ENCODE measurements at regions of chr2 and their contacts with region 1.

Region 1: DNA sequence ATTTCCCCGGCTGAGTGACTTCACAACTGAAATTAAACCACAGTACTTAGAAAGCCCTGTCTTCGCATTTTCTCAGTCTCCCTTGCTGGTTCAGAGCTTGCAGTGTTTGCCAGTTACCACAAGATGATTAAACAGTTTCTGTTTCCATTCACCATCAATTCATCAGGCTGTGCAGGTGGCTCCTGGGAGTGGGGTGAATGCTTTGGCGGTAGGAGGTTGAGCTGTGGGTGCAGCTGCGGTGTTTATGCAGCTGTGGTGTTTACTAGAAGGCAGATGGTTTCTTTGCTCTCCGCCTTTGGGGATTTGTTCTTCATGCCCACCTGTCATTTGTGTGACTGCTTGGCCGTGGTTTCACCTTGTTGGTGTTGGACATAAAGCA is 16.1 kb downstream of the ACOXL start:
- DNase-seq: peak; percentile 89
- H3K4me3 Mint-ChIP-seq: peak overlapping the region; percentile 23
- H3K27ac Mint-ChIP-seq: peak overlapping the region; percentile 47
- H3K4me1 Mint-ChIP-seq: peaks cover 19% of the 10 kb centered on the region
- H3K27me3 Mint-ChIP-seq: peaks cover 62% of the 10 kb centered on the region

Region 2: DNA sequence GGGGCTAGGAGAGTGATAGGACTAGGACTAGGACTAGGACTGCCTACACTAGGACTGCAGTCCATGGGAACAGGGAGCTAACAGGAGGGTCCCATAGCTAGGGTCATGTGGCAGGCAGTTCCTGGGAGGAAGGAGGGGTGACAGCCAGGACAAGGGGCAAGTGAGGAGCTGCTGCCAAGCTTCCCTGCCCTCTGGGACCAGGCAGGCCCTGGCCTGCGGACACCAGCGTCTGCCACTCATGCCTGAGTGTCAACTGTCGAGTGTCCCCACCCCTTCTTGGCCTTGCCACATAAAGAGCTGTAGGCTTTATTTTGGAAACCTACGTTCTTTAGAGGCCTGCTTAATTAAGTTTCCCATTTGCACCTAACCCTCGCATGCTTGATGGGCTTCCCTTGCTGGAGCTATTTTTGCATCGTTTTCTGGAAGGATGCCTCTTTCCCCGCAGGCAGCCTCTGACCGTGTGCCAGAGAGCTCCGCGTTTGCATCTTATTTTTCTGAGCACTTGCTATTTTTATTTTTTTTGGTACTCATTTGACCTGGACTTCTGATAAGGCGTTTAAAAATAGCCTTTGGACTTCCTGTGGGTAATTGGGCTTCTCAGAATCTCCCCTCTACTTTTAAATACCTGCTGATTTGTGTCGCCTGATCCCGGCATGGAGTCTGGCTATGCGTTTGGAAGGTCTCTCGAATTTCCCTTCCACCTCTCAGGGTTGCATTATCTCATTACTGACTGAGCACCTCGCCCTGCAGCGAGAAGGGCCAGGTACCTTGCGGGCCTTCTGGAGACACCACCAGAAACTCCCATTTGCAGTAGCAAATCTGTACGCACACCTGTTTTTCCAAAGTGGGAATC is 1553.1 kb before region 1 on chr2:
- CTCF ChIA-PET with region 1: no interaction called
- POLR2A ChIA-PET with region 1: no interaction called
- intact Hi-C with region 1: no loop called
- DNase-seq: no peak
- H3K4me3 Mint-ChIP-seq: no peak overlapping the region
- H3K27ac Mint-ChIP-seq: no peak overlapping the region
- H3K4me1 Mint-ChIP-seq: no peaks in the 10 kb centered on the region
- H3K27me3 Mint-ChIP-seq: peaks cover 12% of the 10 kb centered on the region

Region 3: GRCh38 chr2:110677530-110678456 is 70.7 kb before region 1 on chr2 and contains the start of gene BUB1:
- CTCF ChIA-PET with region 1: no interaction called
- POLR2A ChIA-PET with region 1: interaction called, 12 read pairs
- intact Hi-C with region 1: loop called (anchors 1 kb)
- DNase-seq: peak; percentile 97
- H3K4me3 Mint-ChIP-seq: peak within 1 kb of the TSS; percentile 94
- H3K27ac Mint-ChIP-seq: peak within 1 kb of the TSS; percentile 96
- H3K4me1 Mint-ChIP-seq: peaks cover 21% of the 10 kb centered on the region
- H3K27me3 Mint-ChIP-seq: no peaks in the 10 kb centered on the region
- total RNA-seq, gene BUB1: 90.8 to 102 TPM

Region 4: DNA sequence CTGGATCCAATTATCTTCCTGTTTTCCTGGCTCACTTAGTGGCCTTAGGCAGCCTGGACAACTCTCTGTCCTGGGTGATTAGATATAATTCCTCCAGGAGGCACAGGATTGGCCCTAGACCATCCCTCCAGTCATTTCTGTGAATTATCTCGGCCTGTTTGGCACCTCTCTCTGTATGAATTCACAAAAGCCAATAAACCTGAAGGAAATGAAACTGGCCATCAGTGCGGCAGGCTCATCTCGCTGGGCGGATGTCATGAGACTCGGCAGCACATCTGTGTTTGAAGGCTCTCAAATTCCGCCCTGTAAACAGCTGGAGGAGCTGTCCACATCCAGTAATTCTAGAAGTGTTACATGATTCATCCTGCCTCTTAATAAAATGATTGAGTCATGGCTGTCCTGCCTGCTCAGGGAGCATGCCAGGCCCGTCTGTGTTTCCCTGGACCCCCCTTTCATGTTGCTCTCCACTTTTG is 22.5 kb after region 1 on chr2:
- CTCF ChIA-PET with region 1: no interaction called
- POLR2A ChIA-PET with region 1: no interaction called
- intact Hi-C with region 1: no loop called
- DNase-seq: no peak
- H3K4me3 Mint-ChIP-seq: no peak overlapping the region
- H3K27ac Mint-ChIP-seq: no peak overlapping the region
- H3K4me1 Mint-ChIP-seq: no peaks in the 10 kb centered on the region
- H3K27me3 Mint-ChIP-seq: peaks cover 33% of the 10 kb centered on the region

Region 5: GRCh38 chr2:110804915-110805314 is 56.4 kb after region 1 on chr2:
- CTCF ChIA-PET with region 1: no interaction called
- POLR2A ChIA-PET with region 1: no interaction called
- intact Hi-C with region 1: loop called (anchors 1 kb)
- DNase-seq: peak; percentile 85
- H3K4me3 Mint-ChIP-seq: peak overlapping the region; percentile 3
- H3K27ac Mint-ChIP-seq: peak overlapping the region; percentile 29
- H3K4me1 Mint-ChIP-seq: peaks cover 16% of the 10 kb centered on the region
- H3K27me3 Mint-ChIP-seq: peaks cover 43% of the 10 kb centered on the region